ENCODE measurements at regions of chr4 and their contacts with region 1.

Region 1: DNA sequence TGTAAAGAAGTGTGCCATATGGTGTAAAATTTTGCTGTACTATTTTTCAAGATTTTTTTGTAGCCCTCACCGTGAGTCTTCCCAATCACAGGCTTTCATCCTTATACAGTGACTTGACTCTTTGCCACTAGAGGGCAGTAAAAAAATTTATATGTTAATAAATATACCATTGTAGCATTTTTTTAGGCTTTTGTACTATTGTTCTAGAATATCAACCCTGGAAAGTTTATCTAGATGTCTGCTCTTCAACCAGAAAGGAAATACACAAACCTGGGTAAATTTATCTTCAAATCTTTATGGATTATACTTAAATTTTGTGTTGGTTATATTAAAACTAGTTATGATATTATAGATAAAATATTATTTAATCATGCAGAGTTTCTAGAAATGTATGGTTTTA is 235.3 kb downstream of the TENM3 start:
- DNase-seq: no peak
- H3K4me3 ChIP-seq: no peak overlapping the region
- CTCF ChIP-seq: no peak
- POLR2A ChIP-seq: no peak

Region 2: GRCh38 chr4:182806259-182807252 is 328.1 kb after region 1 on chr4:
- intact Hi-C with region 1: loop called (anchors 10 kb)
- DNase-seq: peak; percentile 39 to 94
- H3K4me3 ChIP-seq: no peak overlapping the region
- CTCF ChIP-seq: no peak
- POLR2A ChIP-seq: no peak